Posterior vena cava (tissue), 2 donors: ENCODE measurements at regions of chr3 and their contacts with region 1.

Region 1: DNA sequence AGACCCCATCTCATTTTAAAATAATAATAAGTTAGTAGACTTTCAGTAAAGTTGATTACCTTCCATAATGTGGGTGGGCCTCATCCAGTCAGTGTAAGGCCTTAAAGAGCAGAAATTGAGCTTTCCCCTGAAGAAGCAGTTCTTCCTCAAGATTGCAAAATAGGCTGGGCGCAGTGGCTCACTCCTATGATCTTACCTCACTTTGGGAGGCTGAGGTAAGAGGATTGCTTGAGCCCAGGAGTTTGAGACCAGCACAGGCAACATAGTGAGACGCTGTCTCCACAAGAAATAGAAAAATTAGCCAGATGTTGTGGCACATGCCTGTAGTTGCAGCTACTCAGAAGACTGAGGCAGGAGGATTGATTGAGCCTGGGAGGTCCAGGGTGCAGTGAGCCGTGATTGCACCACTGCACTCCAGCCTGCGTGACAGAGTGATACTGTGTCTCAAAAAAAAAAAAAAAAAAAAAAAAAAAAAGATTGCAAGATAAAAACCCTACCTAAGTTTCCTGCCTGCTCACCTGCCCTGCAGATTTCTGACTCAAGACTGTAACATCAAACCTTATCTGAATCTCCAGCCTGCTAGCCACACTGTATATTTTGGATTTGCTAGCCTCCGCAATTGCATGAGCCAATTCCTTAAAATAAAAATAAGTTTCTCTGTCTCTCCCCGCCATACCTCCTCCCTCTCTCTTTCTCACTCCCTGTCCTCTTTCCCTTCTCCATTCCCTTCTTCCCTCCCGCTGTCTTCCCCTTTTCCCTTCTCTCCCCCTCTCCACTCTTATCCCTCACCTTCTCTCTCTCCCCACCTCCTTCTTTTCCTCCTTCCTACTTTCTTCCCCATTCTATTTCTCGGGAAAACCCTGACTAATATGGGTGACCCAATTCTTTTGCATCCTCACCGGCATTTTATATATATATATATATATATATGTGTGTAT is 16.9 kb downstream of the KLHL18 start:
- DNase-seq: no peak

Region 2: GRCh38 chr3:47282424-47283192 is 17.0 kb before region 1 on chr3 and contains the starts of genes KIF9 and KLHL18:
- intact Hi-C with region 1: no loop called
- DNase-seq: peak; percentile 98
- total RNA-seq, gene KIF9: 4.7 to 5.6 TPM
- total RNA-seq, gene KLHL18: 21.2 to 21.6 TPM

Region 3: GRCh38 chr3:47324278-47324865 is 24.7 kb after region 1 on chr3:
- intact Hi-C with region 1: loop called in 1 of 2 experiments (anchors 1 kb)
- DNase-seq: no peak